ENCODE measurements at regions of chr20 and their contacts with region 1.

Region 1: DNA sequence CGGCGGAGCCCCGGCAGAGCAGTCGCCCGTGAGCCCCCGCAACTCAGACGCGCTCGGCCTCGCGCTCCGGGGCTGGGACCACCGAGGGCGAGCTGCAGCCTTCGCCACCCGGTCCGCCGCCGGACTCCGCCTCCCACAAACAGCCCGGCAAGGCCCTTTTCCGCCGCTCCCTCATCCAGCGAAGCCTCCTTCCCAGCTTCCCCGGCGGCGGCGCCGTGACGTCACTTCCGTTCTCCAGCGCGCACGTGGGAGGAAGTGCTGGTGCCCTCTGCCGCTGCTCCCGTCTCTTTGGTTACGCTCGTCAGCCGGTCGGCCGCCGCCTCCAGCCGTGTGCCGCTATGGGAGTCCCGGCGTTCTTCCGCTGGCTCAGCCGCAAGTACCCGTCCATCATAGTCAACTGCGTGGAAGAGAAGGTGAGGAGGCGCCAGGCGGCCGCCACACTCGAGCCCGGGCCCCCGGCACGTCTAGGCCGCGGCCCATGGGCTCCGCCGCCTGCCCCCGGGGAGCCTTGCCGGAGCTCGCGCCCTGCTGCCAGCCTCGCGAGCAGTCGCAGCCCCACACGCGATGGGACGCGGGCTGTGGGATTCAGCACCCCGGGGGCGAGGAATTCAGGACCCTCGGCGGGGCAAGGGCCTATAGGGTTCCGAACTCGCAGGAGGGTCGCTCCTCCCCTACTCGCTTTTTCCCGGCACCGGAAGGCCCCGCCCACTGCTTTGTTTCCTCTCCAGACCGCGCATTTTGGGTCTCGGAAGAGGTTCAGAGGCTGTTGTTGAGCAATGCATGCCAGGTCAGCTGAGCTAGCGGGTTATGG is at the start of gene XRN2:
- DNase-seq: peak; percentile 99
- ATAC-seq: peak; percentile 99
- total RNA-seq, gene XRN2: 30.9 TPM

Region 2: GRCh38 chr20:21125849-21126580 is 177.3 kb before region 1 on chr20 and contains the start of gene KIZ:
- intact Hi-C with region 1: loop called (anchors 5 kb)
- DNase-seq: peak; percentile 99
- ATAC-seq: peak; percentile 100
- total RNA-seq, gene KIZ: 28.0 TPM